ENCODE measurements at regions of chr17 and their contacts with region 1.

Region 1: DNA sequence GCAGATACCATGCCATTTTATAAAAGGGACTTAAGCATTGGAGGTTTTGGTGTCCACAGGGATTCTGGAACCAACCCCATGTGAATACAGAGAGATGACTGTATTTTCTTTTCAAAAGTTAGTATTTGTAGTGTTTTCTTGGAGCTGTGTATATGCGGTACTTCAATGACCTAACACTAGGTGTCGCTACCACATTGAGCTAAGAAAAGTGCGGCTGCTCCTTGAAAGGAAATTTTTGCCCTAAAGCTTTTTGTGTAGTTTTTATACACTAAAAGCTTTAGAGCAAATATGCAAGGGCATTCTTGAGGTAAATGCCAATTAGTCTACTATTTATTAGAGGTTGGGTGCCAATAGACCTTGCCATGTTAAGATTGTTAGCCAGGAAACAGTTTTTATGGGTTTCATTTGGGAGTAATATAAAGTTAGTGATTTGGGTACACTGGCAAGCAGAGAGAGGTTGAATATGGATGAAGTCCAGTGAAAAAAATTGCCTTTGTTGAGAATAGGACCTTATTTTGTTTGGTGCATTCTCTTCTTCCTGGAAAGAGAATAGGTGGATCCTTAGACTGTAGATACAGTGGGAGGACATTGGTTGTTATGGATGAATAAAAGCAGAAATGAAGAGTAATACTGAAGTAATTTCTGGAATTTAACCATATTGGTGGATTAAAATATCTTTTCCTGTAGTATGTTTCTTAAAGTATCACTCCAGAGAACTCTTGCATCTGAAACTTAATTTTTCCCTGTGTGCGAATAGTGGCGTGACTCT is 43.3 kb downstream of the BCAS3 start:
- H3K4me3 ChIP-seq: no peak overlapping the region
- H3K27ac ChIP-seq: no peak overlapping the region
- H3K4me1 ChIP-seq: no peaks in the 10 kb centered on the region
- CTCF ChIP-seq: 0 out of 2 replicates have a peak, but pooled peaks have one; percentile 35

Region 2: DNA sequence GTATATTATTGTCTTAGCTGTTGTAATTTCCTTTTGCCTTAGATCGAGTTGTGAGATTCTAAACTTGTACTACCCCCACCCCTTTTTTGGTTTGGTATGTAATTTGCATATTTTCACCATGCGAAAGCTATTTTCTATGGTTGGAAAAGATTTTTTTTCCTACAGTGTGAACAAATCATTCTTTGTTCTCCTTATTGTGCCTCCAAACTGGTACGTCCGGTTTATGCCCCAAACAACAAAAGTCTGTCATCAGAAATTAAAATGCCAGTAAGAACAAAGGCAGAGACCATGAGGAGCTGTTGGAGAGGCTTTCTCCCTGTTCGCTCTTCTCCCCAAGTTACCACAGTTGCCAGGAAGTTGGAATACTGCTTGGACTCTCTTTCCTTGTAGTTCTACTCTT is 22.9 kb after region 1 on chr17:
- CTCF ChIA-PET with region 1: interaction called, 16 read pairs
- POLR2A ChIA-PET with region 1: no interaction called
- H3K4me3 ChIP-seq: peak overlapping the region; percentile 1
- H3K27ac ChIP-seq: no peak overlapping the region
- H3K4me1 ChIP-seq: 0 out of 2 replicates have a peak, but pooled peaks cover 4% of the 10 kb centered on the region
- CTCF ChIP-seq: no peak

Region 3: GRCh38 chr17:60971515-60972369 is 250.8 kb after region 1 on chr17:
- CTCF ChIA-PET with region 1: interaction called, 15 read pairs
- POLR2A ChIA-PET with region 1: no interaction called
- H3K4me3 ChIP-seq: no peak overlapping the region
- H3K27ac ChIP-seq: no peak overlapping the region
- H3K4me1 ChIP-seq: no peaks in the 10 kb centered on the region
- CTCF ChIP-seq: no peak

Region 4: DNA sequence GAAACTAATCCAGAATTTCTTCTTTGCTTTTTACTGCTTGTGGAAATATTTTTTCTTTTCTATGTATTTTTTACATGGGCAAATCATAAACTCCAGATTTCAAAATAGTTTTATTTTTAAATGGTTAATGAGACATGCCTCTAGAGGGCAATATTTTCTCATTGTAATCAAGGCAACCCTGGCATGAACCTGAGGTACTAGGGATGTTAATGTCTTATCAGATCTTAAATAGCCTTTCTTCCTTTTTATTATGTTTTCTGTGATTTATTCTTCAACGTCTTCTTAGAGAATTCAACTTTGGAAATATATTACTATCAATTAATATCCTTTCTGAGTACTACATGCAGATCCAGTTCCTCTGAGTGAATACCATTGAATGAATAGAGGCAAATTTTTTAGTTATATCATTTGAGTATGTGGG is 281.4 kb after region 1 on chr17:
- CTCF ChIA-PET with region 1: interaction called, 15 read pairs
- POLR2A ChIA-PET with region 1: no interaction called
- H3K4me3 ChIP-seq: no peak overlapping the region
- H3K27ac ChIP-seq: no peak overlapping the region
- H3K4me1 ChIP-seq: peaks cover 2% of the 10 kb centered on the region; the same call in 1 of the 2 replicates
- CTCF ChIP-seq: no peak

Region 5: GRCh38 chr17:61389670-61390478 is 668.9 kb after region 1 on chr17:
- CTCF ChIA-PET with region 1: interaction called, 13 read pairs
- POLR2A ChIA-PET with region 1: no interaction called
- H3K4me3 ChIP-seq: no peak overlapping the region
- H3K27ac ChIP-seq: no peak overlapping the region
- H3K4me1 ChIP-seq: peaks cover 3% of the 10 kb centered on the region
- CTCF ChIP-seq: peak; percentile 85

Region 6: GRCh38 chr17:61770752-61771533 is 1050.0 kb after region 1 on chr17:
- CTCF ChIA-PET with region 1: no interaction called
- POLR2A ChIA-PET with region 1: no interaction called
- H3K4me3 ChIP-seq: no peak overlapping the region
- H3K27ac ChIP-seq: no peak overlapping the region
- H3K4me1 ChIP-seq: no peaks in the 10 kb centered on the region
- CTCF ChIP-seq: no peak

Measured in HEK293 (cell line).